ENCODE measurements at regions of chr9 and their contacts with region 1.

Region 1: DNA sequence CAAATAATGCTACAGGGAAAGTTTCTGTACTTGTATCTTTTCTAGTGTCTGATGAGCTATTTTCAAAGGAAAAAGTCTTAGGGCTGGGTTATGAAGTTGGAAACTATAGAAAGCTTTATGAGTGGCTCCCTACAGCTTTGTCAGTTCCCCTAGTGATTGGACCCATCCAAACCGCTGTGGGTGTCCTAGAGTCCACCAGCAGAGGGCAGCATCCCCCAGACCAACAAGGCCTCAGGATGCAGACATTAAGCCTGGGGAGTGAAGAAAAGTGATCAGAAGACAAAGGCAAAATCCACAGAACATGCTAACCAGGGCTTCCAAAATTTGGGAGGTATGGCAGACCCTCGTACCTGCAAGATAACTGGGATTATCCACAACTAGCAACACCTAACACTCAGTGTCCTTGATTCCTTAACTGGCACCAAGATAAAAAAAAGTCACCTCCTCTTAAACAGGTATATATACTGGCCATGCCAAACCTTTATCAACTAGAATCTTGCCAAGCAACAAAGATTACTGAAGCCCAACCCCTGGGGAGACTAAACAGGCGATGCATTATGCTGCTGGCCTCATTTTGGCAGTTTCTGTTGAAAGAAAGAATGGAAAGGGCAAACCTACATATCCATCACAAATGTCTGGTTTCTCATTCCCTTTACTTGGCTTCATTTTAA is 110.4 kb upstream of the NR5A1 start:
- DNase-seq: peak; percentile 48
- H3K4me3 ChIP-seq: no peak overlapping the region
- H3K27ac ChIP-seq: no peak overlapping the region
- H3K27me3 ChIP-seq: peaks cover 4% of the 10 kb centered on the region
- CTCF ChIP-seq: peak; percentile 98

Region 2: GRCh38 chr9:123478967-123479602 is 1138.5 kb before region 1 on chr9:
- CTCF ChIA-PET with region 1: no interaction called
- POLR2A ChIA-PET with region 1: no interaction called
- DNase-seq: no peak
- H3K4me3 ChIP-seq: no peak overlapping the region
- H3K27ac ChIP-seq: no peak overlapping the region
- H3K27me3 ChIP-seq: no peaks in the 10 kb centered on the region
- CTCF ChIP-seq: no peak

Region 3: DNA sequence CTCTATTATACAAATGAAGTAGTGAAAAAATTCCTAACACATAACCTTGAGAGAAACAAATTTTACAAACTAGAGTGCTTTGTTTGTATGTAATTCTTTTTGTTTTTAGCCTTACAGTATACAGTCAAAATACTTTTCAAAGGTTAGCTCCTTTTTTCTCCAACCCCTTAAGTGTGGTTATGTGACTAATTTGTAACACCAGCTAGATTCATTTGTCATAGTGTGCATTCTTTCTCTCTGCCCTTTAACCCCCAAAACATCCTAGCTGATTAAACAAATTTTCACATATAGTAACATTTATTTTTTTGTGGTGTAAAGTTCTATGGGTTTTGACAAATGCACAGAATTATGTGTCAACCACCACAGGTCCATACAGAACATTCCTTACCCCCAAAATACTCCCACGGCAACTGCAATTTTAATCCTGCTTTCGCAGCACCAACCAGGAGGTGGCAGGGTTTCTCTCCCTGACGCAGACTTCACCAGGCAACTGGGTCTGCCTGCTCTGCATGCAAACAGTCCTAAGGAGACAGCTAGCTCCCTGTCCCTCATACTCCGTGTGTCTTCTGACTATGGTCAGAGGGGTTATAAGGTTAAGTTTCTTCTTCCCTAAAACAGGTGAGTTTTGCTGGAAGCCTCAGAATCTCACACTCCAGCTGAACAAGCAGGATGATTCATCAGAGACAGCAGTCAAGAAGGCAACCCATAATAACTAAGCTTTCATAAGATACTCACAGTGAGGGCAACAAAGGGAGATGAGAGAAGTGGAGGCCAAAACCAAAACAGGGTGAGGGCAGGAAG is 65.9 kb before region 1 on chr9:
- CTCF ChIA-PET with region 1: interaction called, 42 read pairs
- POLR2A ChIA-PET with region 1: no interaction called
- DNase-seq: peak; percentile 34
- H3K4me3 ChIP-seq: no peak overlapping the region
- H3K27ac ChIP-seq: no peak overlapping the region
- H3K27me3 ChIP-seq: peaks cover 6% of the 10 kb centered on the region
- CTCF ChIP-seq: peak; percentile 87

Region 4: DNA sequence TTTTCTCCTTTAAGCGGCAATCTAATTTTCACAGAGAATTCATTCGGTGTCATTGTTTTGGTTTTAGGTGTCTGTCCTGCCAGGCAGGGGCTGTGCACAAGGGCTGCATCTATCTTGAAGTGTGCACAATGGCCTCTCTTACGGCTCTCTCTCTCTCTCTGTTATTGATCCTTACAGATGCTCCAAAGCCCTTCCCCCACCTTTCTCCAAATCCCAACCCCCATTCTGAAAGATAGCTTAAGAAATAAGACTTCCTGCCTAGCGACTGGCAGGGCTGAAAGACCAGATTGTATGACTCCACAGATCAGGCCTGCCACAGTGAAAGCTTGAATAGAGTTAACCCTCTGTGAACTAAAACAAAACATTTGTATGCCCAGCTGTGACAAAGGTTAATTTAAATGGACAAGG is 24.0 kb before region 1 on chr9:
- CTCF ChIA-PET with region 1: interaction called, 52 read pairs
- POLR2A ChIA-PET with region 1: no interaction called
- DNase-seq: no peak
- H3K4me3 ChIP-seq: no peak overlapping the region
- H3K27ac ChIP-seq: no peak overlapping the region
- H3K27me3 ChIP-seq: no peaks in the 10 kb centered on the region
- CTCF ChIP-seq: no peak

Region 5: GRCh38 chr9:124639637-124640036 is 22.0 kb after region 1 on chr9:
- CTCF ChIA-PET with region 1: interaction called, 12 read pairs
- POLR2A ChIA-PET with region 1: no interaction called
- DNase-seq: no peak
- H3K4me3 ChIP-seq: no peak overlapping the region
- H3K27ac ChIP-seq: no peak overlapping the region
- H3K27me3 ChIP-seq: no peaks in the 10 kb centered on the region
- CTCF ChIP-seq: no peak

Region 6: DNA sequence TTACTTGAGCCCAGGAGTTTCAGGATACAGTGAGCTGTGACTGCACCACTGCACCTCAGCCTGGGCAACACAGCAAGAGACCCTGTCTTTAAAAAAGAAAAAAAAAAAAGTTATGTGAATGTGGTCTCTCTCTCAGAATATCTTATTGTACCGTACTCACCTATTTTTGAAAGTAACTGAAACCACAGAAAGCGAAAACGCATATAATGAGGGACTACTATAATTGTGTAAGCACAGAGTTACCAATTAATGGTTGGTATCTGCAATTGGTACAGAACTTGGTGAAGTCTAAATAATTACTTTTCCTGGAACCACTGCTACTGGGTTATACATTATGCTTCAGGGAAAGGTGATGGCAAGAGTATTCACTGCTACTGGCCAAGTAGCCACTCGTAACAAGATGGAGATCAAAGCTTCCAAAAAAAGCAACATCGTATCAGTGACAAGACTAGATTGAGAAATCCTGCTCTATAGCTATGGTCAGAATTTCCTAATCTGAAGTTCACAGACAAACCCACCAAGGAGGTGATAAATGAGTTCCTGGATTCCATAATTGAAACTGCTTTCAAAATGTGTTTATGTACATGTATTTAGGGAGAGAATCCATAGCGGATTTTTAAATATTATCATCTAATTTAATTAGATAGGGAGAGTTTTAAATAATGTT is 70.8 kb after region 1 on chr9:
- CTCF ChIA-PET with region 1: interaction called, 22 read pairs
- POLR2A ChIA-PET with region 1: interaction called, 3 read pairs
- DNase-seq: no peak
- H3K4me3 ChIP-seq: no peak overlapping the region
- H3K27ac ChIP-seq: no peak overlapping the region
- H3K27me3 ChIP-seq: no peaks in the 10 kb centered on the region
- CTCF ChIP-seq: no peak

Region 7: DNA sequence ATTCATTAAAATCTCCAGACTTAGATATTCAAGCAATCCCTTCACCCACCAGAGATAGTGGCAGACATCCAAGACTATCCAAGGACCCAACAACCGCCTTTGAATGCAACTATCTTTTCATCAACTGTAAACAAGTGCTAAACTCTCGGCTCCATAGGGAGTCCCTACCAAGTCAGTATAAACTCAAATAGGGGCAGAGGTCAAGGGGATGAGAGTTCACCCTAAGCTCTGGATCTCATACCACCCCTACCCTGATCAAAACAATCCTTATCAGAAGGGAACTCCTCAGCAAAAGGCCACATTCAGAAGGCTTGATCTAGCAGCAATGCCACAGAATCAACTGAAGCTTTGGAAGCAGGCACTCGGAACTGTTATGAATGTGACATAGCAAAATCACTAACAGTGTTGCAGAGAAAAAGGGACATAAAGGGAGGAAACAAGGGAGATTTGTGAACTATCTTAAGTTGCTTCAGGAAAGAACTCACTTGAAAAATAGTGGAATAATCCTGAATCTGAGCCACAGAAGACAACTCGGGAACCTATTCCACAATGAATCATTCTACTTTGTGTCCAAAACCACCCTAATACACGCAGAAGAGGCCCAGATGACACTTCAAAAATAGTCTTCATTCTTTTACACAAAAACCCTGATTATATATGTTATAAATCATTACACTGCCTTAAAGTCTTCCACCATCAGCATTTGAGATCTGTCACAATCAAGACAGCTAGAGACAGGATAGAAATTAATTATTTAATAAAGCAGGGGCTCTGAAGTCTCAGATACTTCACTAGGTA is 103.7 kb after region 1 on chr9:
- CTCF ChIA-PET with region 1: interaction called, 314 read pairs
- POLR2A ChIA-PET with region 1: no interaction called
- DNase-seq: no peak
- H3K4me3 ChIP-seq: no peak overlapping the region
- H3K27ac ChIP-seq: no peak overlapping the region
- H3K27me3 ChIP-seq: no peaks in the 10 kb centered on the region
- CTCF ChIP-seq: no peak

Region 8: GRCh38 chr9:124764774-124765438 is 147.3 kb after region 1 on chr9:
- CTCF ChIA-PET with region 1: interaction called, 31 read pairs
- POLR2A ChIA-PET with region 1: no interaction called
- DNase-seq: no peak
- H3K4me3 ChIP-seq: no peak overlapping the region
- H3K27ac ChIP-seq: no peak overlapping the region
- H3K27me3 ChIP-seq: peaks cover 86% of the 10 kb centered on the region
- CTCF ChIP-seq: peak; percentile 39